ENCODE measurements at regions of chr7 and their contacts with region 1.

Region 1: DNA sequence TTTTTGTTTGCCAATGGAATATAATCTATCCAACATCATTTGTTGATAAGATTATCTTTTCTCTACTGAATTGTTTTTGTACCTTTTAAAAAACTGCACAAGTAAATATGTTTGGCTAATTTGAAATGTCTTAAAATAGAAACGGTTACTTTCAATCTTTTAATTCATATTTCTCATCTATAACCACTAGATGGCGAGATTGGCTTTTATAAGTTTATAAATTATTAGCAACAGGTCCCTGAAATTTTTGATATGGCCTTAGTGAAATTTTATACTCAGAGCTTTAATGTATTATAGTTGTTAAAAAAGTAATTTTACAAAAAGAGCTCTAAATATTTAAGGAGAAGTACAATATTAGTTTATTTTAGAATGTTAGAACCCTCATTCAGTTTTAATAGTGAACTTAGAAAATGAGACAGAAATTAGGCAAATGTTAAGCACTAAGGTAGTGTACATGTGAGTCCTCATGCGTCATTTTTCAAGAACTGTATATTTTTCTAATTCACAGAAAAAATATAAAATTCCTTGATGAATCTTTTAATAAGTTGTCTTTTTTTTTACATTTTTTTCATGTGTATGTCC is 592.5 kb downstream of the ARL4A start:
- DNase-seq: no peak
- ATAC-seq: no peak
- H3K4me3 ChIP-seq: no peak overlapping the region
- H3K27ac ChIP-seq: no peak overlapping the region
- H3K4me1 ChIP-seq: no peaks in the 10 kb centered on the region
- H3K27me3 ChIP-seq: no peaks in the 10 kb centered on the region

Region 2: DNA sequence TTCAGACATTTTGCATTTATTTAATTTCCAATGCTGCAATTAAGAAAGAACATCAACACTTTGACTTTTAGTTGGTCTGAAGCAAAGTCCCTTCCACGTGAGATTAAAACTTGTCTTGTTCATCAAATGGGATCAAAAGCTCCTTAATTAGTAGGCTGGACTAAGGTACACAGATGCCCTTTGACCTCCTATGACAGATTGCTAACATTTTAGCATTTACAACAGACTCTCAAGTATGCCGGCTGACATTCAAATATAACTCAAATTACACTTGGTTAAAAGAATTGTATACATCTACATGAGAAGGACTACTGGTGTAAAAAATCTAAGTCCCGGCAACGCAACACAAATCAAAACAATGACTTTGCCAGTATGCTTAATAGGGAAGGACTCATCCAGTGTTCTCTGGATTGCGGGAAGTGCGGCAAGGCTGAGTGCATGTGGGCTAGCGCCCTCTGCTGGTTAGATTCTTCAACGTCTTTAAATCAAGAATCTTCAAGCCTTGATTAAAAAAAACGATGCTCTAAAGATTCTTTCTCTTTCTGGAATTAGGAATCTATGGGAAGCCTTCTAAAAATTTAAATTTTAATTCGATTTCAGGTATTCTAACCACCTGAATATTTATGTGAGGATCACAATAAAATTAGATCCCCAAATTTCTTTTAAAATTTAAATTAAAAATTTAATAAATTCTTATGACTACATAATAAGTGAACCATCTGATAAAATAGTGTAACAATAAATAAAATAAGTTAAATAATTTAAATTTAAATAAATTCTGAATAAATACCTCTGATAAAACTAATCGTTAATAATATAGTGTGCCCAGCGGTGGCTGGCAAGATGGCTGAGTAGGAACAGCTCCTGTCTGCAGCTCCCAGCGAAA is 1177.9 kb after region 1 on chr7:
- intact Hi-C with region 1: loop called in 1 of 2 experiments (anchors 10 kb)
- DNase-seq: peak; percentile 61 to 74
- ATAC-seq: peak; percentile 81
- H3K4me3 ChIP-seq: no peak overlapping the region
- H3K27ac ChIP-seq: no peak overlapping the region
- H3K4me1 ChIP-seq: no peaks in the 10 kb centered on the region
- H3K27me3 ChIP-seq: no peaks in the 10 kb centered on the region

Region 3: DNA sequence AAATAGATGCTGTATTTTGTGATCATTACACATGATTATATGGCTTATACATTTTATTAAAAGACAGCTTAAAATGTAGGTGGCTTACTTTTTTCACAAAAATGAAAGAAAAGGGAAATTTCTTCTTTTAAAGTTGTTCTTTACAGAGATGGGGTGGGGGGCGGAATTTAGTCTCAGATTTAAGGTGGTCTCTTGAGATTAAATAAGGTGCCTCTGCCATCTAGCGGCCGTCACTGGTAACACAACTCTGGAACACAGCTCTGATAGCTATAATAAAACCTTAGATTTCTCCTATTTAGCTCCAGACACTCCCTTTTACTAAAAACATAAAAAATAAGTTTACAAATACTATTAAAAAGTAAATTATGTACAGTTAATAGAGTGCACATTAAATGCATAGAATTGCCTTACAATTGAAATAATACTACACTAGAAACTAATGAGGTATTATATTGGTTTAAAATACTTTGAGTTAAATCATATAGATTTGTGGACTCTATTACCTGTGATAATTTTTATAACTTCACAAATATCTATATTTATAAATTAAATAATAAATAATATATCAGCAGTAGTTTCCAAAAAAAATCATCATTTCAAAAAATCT is 1411.8 kb after region 1 on chr7:
- intact Hi-C with region 1: loop called (anchors 5 kb)
- DNase-seq: peak; percentile 50 to 73
- ATAC-seq: no peak
- H3K4me3 ChIP-seq: no peak overlapping the region
- H3K27ac ChIP-seq: no peak overlapping the region
- H3K4me1 ChIP-seq: no peaks in the 10 kb centered on the region
- H3K27me3 ChIP-seq: no peaks in the 10 kb centered on the region

Measured in aorta (tissue), 5 donors.